Activated CD4-positive, alpha-beta T cell treated with anti-CD3 and anti-CD28 coated beads for 36 hours (primary cell): ENCODE measurements at regions of chr10 and their contacts with region 1.

Region 1: DNA sequence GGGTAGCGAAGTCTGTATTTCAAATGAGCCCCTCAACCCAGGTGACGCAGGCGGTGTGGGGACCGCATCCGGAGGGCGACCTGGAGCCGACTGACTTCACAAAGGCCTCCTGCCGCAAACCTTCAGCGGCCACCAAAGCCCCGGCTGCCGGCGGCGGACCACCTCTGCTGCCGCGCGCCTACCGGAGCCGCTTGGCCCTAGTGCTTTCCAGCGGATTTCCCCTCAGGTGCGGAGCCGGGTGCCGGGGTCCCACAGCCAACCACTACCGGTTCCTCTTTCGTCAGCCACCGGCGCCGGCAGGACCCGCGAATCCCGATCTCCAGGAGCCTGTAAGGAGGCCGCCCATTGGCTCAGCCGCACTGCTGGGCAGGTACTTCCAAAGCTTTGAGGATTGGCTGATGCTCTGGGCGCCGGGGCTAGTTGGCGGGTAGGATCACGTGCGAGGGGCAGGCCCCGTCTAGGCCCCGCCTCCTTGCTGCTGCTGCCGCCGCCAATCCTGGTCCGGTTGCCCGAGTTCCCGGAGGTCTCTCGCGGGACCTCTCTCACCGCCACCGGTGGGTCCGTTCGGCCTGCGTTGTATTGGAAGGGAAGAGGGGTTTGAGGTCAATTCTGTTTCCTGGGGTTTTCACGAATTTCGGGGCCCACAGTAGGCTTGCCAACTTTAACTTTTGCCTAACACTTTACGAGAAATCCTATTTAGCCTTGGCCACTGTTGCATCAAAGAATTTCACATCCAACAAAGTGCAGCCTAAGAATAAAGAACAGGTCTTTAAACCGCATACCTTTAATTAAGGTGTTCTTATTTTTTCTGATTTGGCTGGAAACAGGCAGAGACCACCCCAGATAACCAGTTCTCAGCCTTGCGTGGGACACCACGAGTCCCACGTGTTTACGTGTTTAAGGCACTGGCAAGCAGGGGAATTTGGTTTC is at the start of gene GSTO2:
- DNase-seq: peak; percentile 99
- ATAC-seq: peak; percentile 90
- H3K4me3 Mint-ChIP-seq: peak within 1 kb of the TSS; percentile 77
- H3K27ac Mint-ChIP-seq: peak within 1 kb of the TSS; percentile 94
- H3K4me1 Mint-ChIP-seq: peaks cover 42% of the 10 kb centered on the region
- H3K27me3 Mint-ChIP-seq: no peaks in the 10 kb centered on the region
- total RNA-seq, gene GSTO2: 2.1 to 2.8 TPM

Region 2: DNA sequence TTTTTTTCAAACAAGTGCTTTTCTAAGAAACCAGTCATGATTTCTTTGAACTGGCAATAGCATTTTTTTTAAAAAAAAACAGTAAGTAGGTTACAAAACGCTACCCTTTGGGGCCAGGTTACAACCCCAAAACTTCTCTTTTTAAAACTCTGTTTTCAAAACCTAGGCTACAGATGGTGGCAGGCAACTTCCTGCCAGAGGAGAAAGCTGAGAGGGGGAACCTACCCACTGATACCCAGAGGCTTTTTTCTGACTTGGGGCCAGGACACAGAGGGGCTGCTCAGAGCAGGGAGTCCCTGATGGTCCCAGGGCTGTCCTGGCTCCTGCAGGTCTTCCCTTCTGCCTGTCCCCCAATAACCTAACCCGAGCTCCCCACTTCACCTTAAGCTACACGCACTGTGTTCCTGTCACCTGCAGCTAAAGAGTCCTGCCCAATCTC is 357.9 kb before region 1 on chr10:
- CTCF ChIA-PET with region 1: no interaction called
- POLR2A ChIA-PET with region 1: no interaction called
- intact Hi-C with region 1: loop called (anchors 2 kb)
- DNase-seq: peak; percentile 49
- ATAC-seq: peak; percentile 42
- H3K4me3 Mint-ChIP-seq: peak overlapping the region; percentile 57
- H3K27ac Mint-ChIP-seq: peak overlapping the region; percentile 98
- H3K4me1 Mint-ChIP-seq: peaks cover 70% of the 10 kb centered on the region
- H3K27me3 Mint-ChIP-seq: no peaks in the 10 kb centered on the region

Region 3: GRCh38 chr10:103966671-103967447 is 302.1 kb before region 1 on chr10 and contains the start of gene SLK:
- CTCF ChIA-PET with region 1: no interaction called
- POLR2A ChIA-PET with region 1: no interaction called
- intact Hi-C with region 1: loop called (anchors 2 to 5 kb)
- DNase-seq: peak; percentile 90
- ATAC-seq: peak; percentile 82
- H3K4me3 Mint-ChIP-seq: peak within 1 kb of the TSS; percentile 97
- H3K27ac Mint-ChIP-seq: peak within 1 kb of the TSS; percentile 95
- H3K4me1 Mint-ChIP-seq: peaks cover 30% of the 10 kb centered on the region
- H3K27me3 Mint-ChIP-seq: no peaks in the 10 kb centered on the region
- total RNA-seq, gene SLK: 20.2 to 32.5 TPM

Region 4: DNA sequence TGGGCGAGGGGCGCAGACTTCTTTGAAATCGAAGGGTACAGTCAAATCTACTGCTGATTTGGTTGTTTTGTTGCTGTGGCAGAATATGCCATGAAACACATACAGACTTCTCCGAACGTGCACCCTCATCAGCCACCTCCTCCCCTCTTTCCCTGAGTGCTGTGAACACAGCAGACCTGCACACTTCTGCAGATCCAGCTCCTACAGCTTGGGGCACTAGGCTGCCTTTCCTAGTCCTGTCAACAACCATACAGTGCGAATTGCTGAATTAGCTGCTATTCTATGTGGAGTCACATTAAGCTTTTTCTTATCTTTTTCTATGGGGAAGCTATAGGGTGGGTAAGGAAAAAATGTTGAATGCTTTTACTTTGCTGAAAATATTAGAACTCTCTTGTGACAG is 240.8 kb before region 1 on chr10:
- CTCF ChIA-PET with region 1: no interaction called
- POLR2A ChIA-PET with region 1: no interaction called
- intact Hi-C with region 1: no loop called
- DNase-seq: peak; percentile 56
- ATAC-seq: peak; percentile 96
- H3K4me3 Mint-ChIP-seq: no peak overlapping the region
- H3K27ac Mint-ChIP-seq: no peak overlapping the region
- H3K4me1 Mint-ChIP-seq: peaks cover 15% of the 10 kb centered on the region
- H3K27me3 Mint-ChIP-seq: no peaks in the 10 kb centered on the region

Region 5: GRCh38 chr10:104254493-104255310 is 14.3 kb before region 1 on chr10 and contains the start of gene GSTO1:
- CTCF ChIA-PET with region 1: interaction called, 30 read pairs
- POLR2A ChIA-PET with region 1: interaction called, 23 read pairs
- intact Hi-C with region 1: loop called (anchors 1 kb)
- DNase-seq: peak; percentile 71
- ATAC-seq: peak; percentile 56
- H3K4me3 Mint-ChIP-seq: peak within 1 kb of the TSS; percentile 85
- H3K27ac Mint-ChIP-seq: peak within 1 kb of the TSS; percentile 97
- H3K4me1 Mint-ChIP-seq: peaks cover 53% of the 10 kb centered on the region
- H3K27me3 Mint-ChIP-seq: peaks cover 2% of the 10 kb centered on the region
- total RNA-seq, gene GSTO1: 261 to 320 TPM

Region 6: GRCh38 chr10:104328896-104329710 is 60.1 kb after region 1 on chr10:
- CTCF ChIA-PET with region 1: interaction called, 3 read pairs
- POLR2A ChIA-PET with region 1: no interaction called
- intact Hi-C with region 1: loop called (anchors 1 to 2 kb)
- DNase-seq: peak; percentile 89
- ATAC-seq: peak; percentile 92
- H3K4me3 Mint-ChIP-seq: peak overlapping the region; percentile 75
- H3K27ac Mint-ChIP-seq: peak overlapping the region; percentile 89
- H3K4me1 Mint-ChIP-seq: peaks cover 98% of the 10 kb centered on the region
- H3K27me3 Mint-ChIP-seq: no peaks in the 10 kb centered on the region

Region 7: GRCh38 chr10:104993085-104993484 is 724.1 kb after region 1 on chr10:
- CTCF ChIA-PET with region 1: no interaction called
- POLR2A ChIA-PET with region 1: no interaction called
- intact Hi-C with region 1: no loop called
- DNase-seq: no peak
- ATAC-seq: no peak
- H3K4me3 Mint-ChIP-seq: no peak overlapping the region
- H3K27ac Mint-ChIP-seq: no peak overlapping the region
- H3K4me1 Mint-ChIP-seq: peaks cover 2% of the 10 kb centered on the region
- H3K27me3 Mint-ChIP-seq: no peaks in the 10 kb centered on the region